ENCODE measurements at regions of chr15 and their contacts with region 1.

Region 1: GRCh38 chr15:101258238-101259144 is 6.6 kb upstream of the CHSY1 start:
- DNase-seq: peak; percentile 78
- H3K4me3 ChIP-seq: no peak overlapping the region
- H3K27ac ChIP-seq: no peak overlapping the region
- H3K4me1 ChIP-seq: no peaks in the 10 kb centered on the region
- H3K27me3 ChIP-seq: no peaks in the 10 kb centered on the region
- CTCF ChIP-seq: peak; percentile 48 to 82 (median 77)
- EP300 ChIP-seq: no peak
- POLR2A ChIP-seq: no peak

Region 2: DNA sequence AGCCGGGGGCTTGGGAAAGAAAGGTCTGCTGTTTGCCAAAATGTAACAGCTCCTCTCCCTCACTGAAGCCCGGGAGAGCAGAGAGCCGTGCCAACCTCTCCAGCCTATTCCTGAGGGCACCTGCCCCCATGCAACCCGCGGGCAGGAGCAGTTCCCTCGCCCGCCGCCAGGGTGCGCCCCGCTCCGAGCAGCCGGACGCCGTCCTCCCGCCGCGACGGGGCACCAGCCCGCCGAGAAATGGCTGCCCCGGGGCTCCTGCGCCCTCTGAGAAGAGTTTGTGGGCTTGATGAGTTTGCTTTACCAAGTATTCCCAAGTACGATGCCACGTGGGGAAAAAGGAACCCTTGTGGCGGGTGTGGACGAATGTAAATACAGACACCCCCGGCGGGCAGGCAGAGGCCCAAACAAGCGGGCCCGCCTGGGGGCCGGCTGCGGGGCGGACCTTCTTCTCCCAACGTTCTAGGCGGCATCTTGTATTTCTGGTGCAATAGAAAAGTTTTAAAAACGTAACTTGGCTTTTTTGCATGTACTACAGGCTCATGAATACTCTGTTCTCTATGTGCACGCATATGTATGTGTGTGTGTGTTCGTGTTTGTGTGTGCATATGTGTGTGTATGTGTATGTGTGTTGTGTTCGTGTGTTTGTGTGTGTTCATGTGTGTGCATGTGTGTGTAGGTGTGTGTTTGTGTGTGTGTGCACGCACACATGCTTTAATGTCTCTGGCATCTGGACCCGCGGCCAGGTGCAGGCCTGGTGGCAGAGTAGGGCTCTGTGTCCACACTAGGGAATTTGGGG is 169.5 kb before region 1 on chr15:
- intact Hi-C with region 1: loop called (anchors 1 kb)
- DNase-seq: peak; percentile 82
- H3K4me3 ChIP-seq: peak overlapping the region in 3 of 4 donors; percentile 14 to 41 (median 38)
- H3K27ac ChIP-seq: peak overlapping the region in 1 of 4 donors; percentile 11
- H3K4me1 ChIP-seq: peaks cover 0 to 23% (median 8%) of the 10 kb centered on the region in 4 donors
- H3K27me3 ChIP-seq: no peaks in the 10 kb centered on the region
- CTCF ChIP-seq: peak; percentile 86 to 99 (median 96)
- EP300 ChIP-seq: no peak
- POLR2A ChIP-seq: no peak

Region 3: DNA sequence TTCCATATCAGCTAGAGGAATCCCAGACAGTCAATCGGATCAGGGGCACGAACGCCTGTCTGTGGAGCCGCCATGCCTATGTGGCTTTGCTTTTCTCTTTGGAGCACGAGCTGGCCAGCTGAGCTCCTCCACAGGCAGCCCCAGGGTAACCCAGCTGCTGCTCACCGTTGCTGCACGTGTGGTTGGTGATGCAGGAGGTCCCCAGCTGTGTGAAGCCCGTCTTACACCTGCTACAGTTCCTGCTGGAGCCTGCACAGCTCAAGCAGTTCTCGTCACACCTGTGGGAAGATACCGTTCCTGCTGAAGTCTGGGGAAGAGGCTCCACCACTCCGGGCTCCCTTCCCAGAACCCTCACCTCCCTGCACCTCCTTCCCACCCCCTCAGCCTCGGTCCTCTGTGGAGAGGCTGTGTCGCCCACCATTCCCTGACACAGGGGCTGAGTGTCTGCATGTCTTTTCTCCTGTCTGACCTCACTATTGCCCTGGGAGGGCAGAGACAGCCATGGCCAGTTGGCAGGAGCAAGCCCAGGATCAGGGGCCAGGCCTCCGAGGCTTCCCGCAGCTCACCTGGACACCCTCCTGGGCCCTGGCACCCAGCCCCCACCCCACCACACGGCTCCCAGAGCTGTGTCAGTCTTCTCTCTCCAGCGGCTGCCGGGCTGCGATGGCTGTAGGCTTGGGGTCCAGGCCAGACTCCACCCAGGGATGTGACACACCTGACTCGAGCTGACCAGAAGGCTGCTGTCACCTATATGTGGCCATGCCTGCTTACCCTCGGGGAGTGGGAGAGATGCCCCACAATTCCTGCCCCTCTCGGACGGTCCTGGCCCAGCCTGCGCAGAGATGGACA is 48.8 kb after region 1 on chr15:
- intact Hi-C with region 1: no loop called
- DNase-seq: peak; percentile 46
- H3K4me3 ChIP-seq: no peak overlapping the region
- H3K27ac ChIP-seq: no peak overlapping the region
- H3K4me1 ChIP-seq: no peaks in the 10 kb centered on the region
- H3K27me3 ChIP-seq: peaks cover 0 to 15% (median 0%) of the 10 kb centered on the region in 3 donors
- CTCF ChIP-seq: no peak
- EP300 ChIP-seq: no peak
- POLR2A ChIP-seq: no peak

Region 4: DNA sequence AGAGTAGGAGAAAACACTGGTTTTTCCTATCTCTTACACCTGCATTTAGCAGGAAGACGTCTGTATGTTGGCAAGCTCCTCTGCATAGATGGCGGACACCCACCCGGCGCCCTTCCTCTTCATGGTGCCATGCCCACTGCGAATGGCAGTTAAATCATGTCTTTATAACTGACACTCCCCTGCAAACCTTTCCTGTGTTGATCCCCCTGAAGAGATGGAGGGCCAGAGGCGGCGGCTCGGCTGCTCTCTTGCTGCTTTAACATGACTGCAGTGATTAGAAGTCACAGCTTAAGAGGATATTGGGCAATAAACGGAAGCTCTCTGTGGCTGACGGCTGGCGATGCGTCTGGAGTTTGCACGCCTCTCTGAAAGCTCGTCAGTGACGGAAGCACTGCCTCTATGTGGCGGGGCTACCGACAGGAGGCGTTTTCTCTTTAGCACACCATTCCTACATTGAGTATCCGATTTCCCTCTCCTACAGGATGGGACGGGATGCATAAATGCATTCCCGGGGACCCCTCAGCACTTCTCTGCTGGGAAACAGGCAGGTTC is 62.1 kb after region 1 on chr15:
- intact Hi-C with region 1: no loop called
- DNase-seq: peak; percentile 79
- H3K4me3 ChIP-seq: no peak overlapping the region
- H3K27ac ChIP-seq: no peak overlapping the region
- H3K4me1 ChIP-seq: no peaks in the 10 kb centered on the region
- H3K27me3 ChIP-seq: peaks cover 0 to 27% (median 11%) of the 10 kb centered on the region in 3 donors
- CTCF ChIP-seq: peak in 1 of 4 experiments; percentile 20
- EP300 ChIP-seq: no peak
- POLR2A ChIP-seq: no peak

Region 5: DNA sequence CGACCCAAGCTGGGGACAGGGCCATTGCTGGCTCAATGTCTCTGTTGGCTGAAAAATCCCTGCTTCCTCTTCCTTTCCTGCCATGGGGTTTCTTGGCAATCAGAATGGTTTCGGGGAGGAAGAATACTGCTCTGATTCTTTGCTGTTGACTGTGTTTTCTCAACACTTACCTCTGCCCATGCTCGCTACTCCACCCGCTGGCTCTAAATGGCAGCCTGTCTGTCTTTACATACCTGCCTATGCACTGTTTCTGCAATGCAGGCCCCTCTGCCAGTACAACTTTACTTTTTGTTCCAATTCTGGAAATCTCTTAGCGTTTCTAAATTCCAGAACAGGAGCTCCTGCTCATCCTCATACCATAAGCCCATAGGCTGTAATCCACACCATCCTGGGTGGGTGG is 74.9 kb after region 1 on chr15:
- intact Hi-C with region 1: no loop called
- DNase-seq: no peak
- H3K4me3 ChIP-seq: no peak overlapping the region
- H3K27ac ChIP-seq: no peak overlapping the region
- H3K4me1 ChIP-seq: no peaks in the 10 kb centered on the region
- H3K27me3 ChIP-seq: no peaks in the 10 kb centered on the region
- CTCF ChIP-seq: no peak
- EP300 ChIP-seq: no peak
- POLR2A ChIP-seq: no peak